ENCODE measurements at regions of chr5 and their contacts with region 1.

Region 1: GRCh38 chr5:53095931-53096525 is 13.5 kb downstream of the MOCS2 start:
- DNase-seq: no peak
- ATAC-seq: peak; percentile 84
- H3K4me3 Mint-ChIP-seq: no peak overlapping the region
- H3K27ac Mint-ChIP-seq: no peak overlapping the region
- H3K4me1 Mint-ChIP-seq: peaks cover 4% of the 10 kb centered on the region
- H3K27me3 Mint-ChIP-seq: no peaks in the 10 kb centered on the region
- CTCF ChIP-seq: peak; percentile 99

Region 2: GRCh38 chr5:52693280-52693679 is 402.7 kb before region 1 on chr5:
- CTCF ChIA-PET with region 1: no interaction called
- POLR2A ChIA-PET with region 1: no interaction called
- intact Hi-C with region 1: loop called (anchors 10 kb)
- DNase-seq: no peak
- ATAC-seq: no peak
- H3K4me3 Mint-ChIP-seq: no peak overlapping the region
- H3K27ac Mint-ChIP-seq: no peak overlapping the region
- H3K4me1 Mint-ChIP-seq: no peaks in the 10 kb centered on the region
- H3K27me3 Mint-ChIP-seq: peaks cover 4% of the 10 kb centered on the region
- CTCF ChIP-seq: no peak

Region 3: GRCh38 chr5:52915176-52915875 is 180.7 kb before region 1 on chr5:
- CTCF ChIA-PET with region 1: interaction called, 5 read pairs
- POLR2A ChIA-PET with region 1: no interaction called
- intact Hi-C with region 1: loop called (anchors 1 kb)
- DNase-seq: no peak
- ATAC-seq: peak; percentile 80
- H3K4me3 Mint-ChIP-seq: no peak overlapping the region
- H3K27ac Mint-ChIP-seq: no peak overlapping the region
- H3K4me1 Mint-ChIP-seq: peaks cover 5% of the 10 kb centered on the region
- H3K27me3 Mint-ChIP-seq: peaks cover 2% of the 10 kb centered on the region
- CTCF ChIP-seq: no peak

Region 4: DNA sequence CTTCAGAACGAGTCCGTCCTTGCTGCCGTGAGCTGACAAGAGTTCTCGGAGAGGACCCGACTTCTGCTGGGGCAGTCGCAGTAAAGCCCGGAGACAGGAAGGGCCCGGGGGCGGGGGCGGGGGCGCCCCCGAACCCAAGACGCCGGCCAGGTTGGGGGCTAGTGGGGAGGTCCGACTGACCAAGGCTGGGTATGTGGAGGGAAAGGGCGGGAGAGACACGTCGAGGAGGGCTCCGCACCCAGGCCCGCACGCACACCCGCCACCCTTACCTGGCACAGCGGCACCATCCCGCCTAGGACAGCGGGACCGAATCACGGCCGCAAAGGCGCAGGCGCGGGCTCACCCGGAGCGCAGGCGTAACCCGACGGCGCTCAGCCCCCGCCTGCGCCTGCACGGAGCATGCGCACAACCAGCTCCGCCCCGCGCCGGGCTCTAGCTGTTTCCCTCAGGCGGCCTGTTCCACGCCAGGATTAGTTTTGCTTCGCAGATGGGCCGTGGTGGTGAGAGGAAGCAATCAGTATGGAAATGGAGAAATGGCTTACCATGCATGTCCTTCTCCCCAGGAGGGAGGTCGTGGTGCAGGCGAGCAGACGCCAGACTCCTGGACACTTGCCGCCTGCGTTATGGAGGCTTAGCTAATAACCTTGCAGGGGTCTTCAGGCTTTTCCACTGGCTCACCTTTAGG is 13.6 kb after region 1 on chr5 and contains the start of gene MOCS2:
- CTCF ChIA-PET with region 1: interaction called, 9 read pairs
- POLR2A ChIA-PET with region 1: interaction called, 6 read pairs
- intact Hi-C with region 1: loop called (anchors 1 kb)
- DNase-seq: peak; percentile 89
- ATAC-seq: peak; percentile 98
- H3K4me3 Mint-ChIP-seq: peak within 1 kb of the TSS; percentile 95
- H3K27ac Mint-ChIP-seq: peak within 1 kb of the TSS; percentile 92
- H3K4me1 Mint-ChIP-seq: peaks cover 28% of the 10 kb centered on the region
- H3K27me3 Mint-ChIP-seq: no peaks in the 10 kb centered on the region
- CTCF ChIP-seq: no peak
- total RNA-seq, gene MOCS2: 16.8 and 17.0 TPM in 2 replicates

Region 5: GRCh38 chr5:53362521-53362941 is 266.5 kb after region 1 on chr5:
- CTCF ChIA-PET with region 1: no interaction called
- POLR2A ChIA-PET with region 1: no interaction called
- intact Hi-C with region 1: no loop called
- DNase-seq: no peak
- ATAC-seq: no peak
- H3K4me3 Mint-ChIP-seq: no peak overlapping the region
- H3K27ac Mint-ChIP-seq: no peak overlapping the region
- H3K4me1 Mint-ChIP-seq: no peaks in the 10 kb centered on the region
- H3K27me3 Mint-ChIP-seq: no peaks in the 10 kb centered on the region
- CTCF ChIP-seq: no peak